HepG2 (cell line): ENCODE measurements at regions of chr3 and their contacts with region 1.

Region 1: GRCh38 chr3:112814266-112814665 is 32.4 kb downstream of the CD200R1L start:
- DNase-seq: peak; percentile 2
- ATAC-seq: no peak
- H3K4me3 ChIP-seq: no peak overlapping the region
- H3K27ac ChIP-seq: no peak overlapping the region
- H3K4me1 ChIP-seq: no peaks in the 10 kb centered on the region
- H3K27me3 ChIP-seq: no peaks in the 10 kb centered on the region
- CTCF ChIP-seq: 0 out of 2 replicates have a peak, but pooled peaks have one; percentile 10
- EP300 ChIP-seq: no peak
- POLR2A ChIP-seq: no peak
- RAD21 ChIP-seq: no peak

Region 2: DNA sequence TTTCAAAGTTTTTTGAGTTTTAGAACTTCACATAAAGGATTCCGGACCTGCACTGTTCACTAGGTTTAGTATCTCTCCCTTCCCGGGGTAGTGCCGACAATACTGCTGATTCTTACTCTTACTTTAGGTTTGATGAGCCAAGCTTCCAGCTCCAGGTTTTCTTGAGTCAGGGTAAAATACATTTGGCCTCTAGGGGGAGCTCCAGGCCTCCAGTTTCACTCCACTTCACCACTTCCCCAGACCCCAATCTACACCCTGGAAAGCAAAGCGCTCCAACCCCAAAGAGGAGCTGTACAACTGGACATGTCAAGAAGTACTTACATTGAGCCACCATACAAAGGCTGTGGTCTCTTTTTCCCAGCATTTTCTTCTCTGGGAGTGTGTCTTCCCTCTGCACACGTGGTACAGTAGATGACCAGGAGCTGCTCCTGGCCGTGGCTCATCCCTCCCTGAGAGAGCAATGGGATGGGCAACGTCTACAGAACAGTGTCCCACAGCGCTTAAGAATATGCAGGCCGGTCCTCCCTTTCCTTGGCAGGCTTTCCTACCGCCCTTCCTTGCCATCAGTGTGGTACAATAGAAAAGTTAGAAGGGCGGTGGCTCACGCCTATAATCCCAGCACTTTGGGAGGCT is 79.4 kb before region 1 on chr3:
- CTCF ChIA-PET with region 1: no interaction called
- POLR2A ChIA-PET with region 1: no interaction called
- in situ Hi-C with region 1: no loop called
- intact Hi-C with region 1: loop called (anchors 2 kb)
- DNase-seq: peak; percentile 49
- ATAC-seq: peak; percentile 96
- H3K4me3 ChIP-seq: no peak overlapping the region
- H3K27ac ChIP-seq: no peak overlapping the region
- H3K4me1 ChIP-seq: no peaks in the 10 kb centered on the region
- H3K27me3 ChIP-seq: peaks cover 0 to 3% of the 10 kb centered on the region in 2 experiments; a peak in 1 of 5 replicates
- CTCF ChIP-seq: peak; percentile 73
- EP300 ChIP-seq: no peak
- POLR2A ChIP-seq: no peak
- RAD21 ChIP-seq: 0 out of 2 replicates have a peak, but pooled peaks have one; percentile 17

Region 3: GRCh38 chr3:112832735-112833134 is 18.5 kb after region 1 on chr3:
- CTCF ChIA-PET with region 1: no interaction called
- POLR2A ChIA-PET with region 1: no interaction called
- in situ Hi-C with region 1: no loop called
- intact Hi-C with region 1: no loop called
- DNase-seq: no peak
- ATAC-seq: no peak
- H3K4me3 ChIP-seq: no peak overlapping the region
- H3K27ac ChIP-seq: no peak overlapping the region
- H3K4me1 ChIP-seq: no peaks in the 10 kb centered on the region
- H3K27me3 ChIP-seq: no peaks in the 10 kb centered on the region
- CTCF ChIP-seq: no peak
- EP300 ChIP-seq: no peak
- POLR2A ChIP-seq: no peak
- RAD21 ChIP-seq: no peak